GM13976 (cell line): ENCODE measurements at regions of chr15 and their contacts with region 1.

Region 1: GRCh38 chr15:80455668-80456442 is 51.7 kb downstream of the ARNT2 start:
- DNase-seq: peak; percentile 75
- CTCF ChIP-seq: peak; percentile 95

Region 2: DNA sequence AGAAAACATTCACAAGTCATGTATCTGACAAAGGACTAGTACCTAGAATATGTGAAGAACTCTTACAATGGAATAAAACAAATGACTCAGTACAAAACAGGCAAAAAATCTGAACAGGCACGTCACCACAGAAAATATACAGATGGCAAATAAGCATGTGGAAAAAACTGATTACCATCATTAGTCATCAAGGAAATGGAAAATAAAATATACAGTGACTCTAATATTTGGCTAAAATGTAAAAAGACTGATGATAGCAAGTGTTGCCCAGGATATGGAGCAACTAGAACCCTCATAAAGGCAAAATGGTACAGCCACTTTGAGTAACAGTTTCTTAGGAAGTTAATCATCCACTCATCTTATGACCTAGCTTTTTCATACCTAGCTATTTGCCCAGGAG is 143.5 kb after region 1 on chr15:
- in situ Hi-C with region 1: no loop called
- DNase-seq: no peak
- CTCF ChIP-seq: no peak

Region 3: DNA sequence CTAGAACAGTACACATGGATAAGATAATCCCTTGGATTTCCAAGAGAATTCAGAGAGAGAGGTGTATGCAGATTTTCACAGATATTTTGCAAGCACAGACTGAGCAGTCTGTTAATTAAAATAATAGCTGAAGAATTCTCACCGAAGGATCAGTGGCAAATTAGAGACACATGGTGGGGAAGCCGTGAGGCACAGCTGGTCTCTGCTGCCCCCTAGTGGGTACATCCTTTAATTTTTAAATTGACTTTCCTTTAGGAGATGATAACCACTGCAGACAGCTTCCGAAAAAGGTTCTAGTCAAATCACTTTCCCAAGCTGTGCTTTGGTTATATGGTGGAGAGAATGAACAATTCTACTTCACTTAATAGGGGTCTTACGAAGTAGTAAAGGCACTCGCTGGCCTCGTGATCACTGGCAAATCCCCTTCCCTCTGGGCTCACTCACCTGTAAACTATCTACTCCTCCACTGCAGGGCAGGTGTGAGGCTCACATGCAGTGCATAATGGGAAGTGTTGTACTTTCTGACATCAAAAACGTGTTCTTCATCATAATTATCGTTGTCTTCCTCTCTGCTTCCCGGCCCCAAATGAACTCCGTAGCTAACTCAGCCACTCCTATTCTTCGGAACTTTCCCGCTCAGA is 514.3 kb after region 1 on chr15:
- in situ Hi-C with region 1: loop called (anchors 10 kb)
- DNase-seq: peak; percentile 63
- CTCF ChIP-seq: peak; percentile 75